MCF 10A (cell line): ENCODE measurements at regions of chr1 and their contacts with region 1.

Region 1: GRCh38 chr1:211975152-211975941 is 60.0 kb downstream of the INTS7 start:
- DNase-seq: no peak
- H3K4me3 Mint-ChIP-seq: no peak overlapping the region
- H3K27ac Mint-ChIP-seq: peak overlapping the region; percentile 43
- H3K4me1 Mint-ChIP-seq: no peaks in the 10 kb centered on the region
- H3K27me3 Mint-ChIP-seq: no peaks in the 10 kb centered on the region
- CTCF ChIP-seq: no peak

Region 2: DNA sequence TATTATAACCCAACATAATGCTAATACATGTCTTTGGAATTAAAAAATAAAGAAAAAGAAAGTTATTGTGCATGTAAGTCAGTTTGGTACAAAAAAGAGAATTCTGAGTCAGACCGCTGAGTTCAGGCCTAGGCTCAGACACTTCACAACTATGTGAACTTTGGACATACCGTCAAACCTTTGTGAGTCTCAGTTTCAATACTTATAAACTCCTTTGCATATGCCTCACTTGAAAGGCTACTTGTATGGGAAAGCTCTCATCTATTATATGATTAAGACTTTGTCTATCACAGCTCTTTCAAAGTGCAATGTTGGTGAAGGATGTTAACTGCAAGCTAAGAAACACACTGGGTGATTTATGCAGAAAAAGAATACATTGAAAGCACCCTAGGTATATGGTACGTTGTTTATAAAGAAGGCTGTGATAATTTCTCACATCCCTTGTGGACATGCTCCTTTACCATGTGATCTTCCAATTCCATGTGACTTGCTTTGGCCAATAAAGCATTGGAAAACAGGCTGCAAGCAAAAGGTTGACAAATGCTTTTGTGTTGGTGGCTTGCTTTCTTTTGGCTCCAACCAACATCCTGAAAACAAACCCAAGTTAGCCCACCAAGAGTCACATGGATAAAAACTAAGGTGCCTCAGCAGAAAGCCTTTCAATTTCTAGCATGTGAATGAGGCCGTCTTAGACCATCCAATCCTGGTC is 10.4 kb after region 1 on chr1:
- CTCF ChIA-PET with region 1: interaction called, 11 read pairs
- POLR2A ChIA-PET with region 1: interaction called, 5 read pairs
- intact Hi-C with region 1: no loop called
- DNase-seq: no peak
- H3K4me3 Mint-ChIP-seq: no peak overlapping the region
- H3K27ac Mint-ChIP-seq: no peak overlapping the region
- H3K4me1 Mint-ChIP-seq: no peaks in the 10 kb centered on the region
- H3K27me3 Mint-ChIP-seq: no peaks in the 10 kb centered on the region
- CTCF ChIP-seq: no peak